ENCODE measurements at regions of chr1 and their contacts with region 1.

Region 1: GRCh38 chr1:165679282-165680036 is 18.9 kb downstream of the ALDH9A1 start:
- H3K4me3 Mint-ChIP-seq: no peak overlapping the region
- H3K27ac Mint-ChIP-seq: no peak overlapping the region
- H3K4me1 Mint-ChIP-seq: peaks cover 14% of the 10 kb centered on the region
- H3K27me3 Mint-ChIP-seq: no peaks in the 10 kb centered on the region

Region 2: GRCh38 chr1:165726169-165726568 is 46.7 kb after region 1 on chr1:
- intact Hi-C with region 1: loop called (anchors 10 kb)
- H3K4me3 Mint-ChIP-seq: no peak overlapping the region
- H3K27ac Mint-ChIP-seq: no peak overlapping the region
- H3K4me1 Mint-ChIP-seq: no peaks in the 10 kb centered on the region
- H3K27me3 Mint-ChIP-seq: no peaks in the 10 kb centered on the region

Region 3: GRCh38 chr1:165914136-165914798 is 234.8 kb after region 1 on chr1:
- intact Hi-C with region 1: no loop called
- H3K4me3 Mint-ChIP-seq: no peak overlapping the region
- H3K27ac Mint-ChIP-seq: no peak overlapping the region
- H3K4me1 Mint-ChIP-seq: peaks cover 5% of the 10 kb centered on the region
- H3K27me3 Mint-ChIP-seq: no peaks in the 10 kb centered on the region